ENCODE measurements at regions of chr1 and their contacts with region 1.

Region 1: DNA sequence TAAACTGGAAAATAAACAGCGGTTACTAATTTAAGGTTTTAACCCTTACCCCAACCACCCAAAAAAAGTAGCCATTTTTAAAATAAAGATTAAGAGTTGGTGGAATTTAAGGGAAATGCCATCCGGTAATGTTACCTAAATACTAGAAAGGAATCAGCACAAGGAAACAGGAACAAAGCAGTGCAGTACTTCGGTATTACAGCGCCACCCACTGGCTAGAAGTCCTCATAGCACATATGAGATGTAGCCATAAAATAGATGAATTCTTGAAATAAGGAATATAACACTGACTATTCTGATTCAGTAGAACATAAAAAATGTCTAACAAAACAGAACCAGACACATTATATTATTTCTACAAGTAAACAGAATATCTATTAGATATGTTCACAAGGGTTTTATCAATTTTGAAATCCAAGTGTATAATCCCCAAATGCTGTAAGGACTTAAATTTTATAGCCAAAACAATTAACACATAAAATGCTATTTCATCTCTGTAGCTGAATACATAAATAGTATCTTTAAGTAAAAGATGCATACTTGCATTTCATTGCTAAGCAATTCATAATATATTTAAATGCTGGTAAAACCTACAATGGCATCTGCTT is 58.8 kb downstream of the FRRS1 start:
- DNase-seq: peak; percentile 84

Region 2: GRCh38 chr1:99180343-99180808 is 527.3 kb before region 1 on chr1:
- intact Hi-C with region 1: loop called in 1 of 2 experiments (anchors 10 kb)
- DNase-seq: no peak